ENCODE measurements at regions of chr15 and their contacts with region 1.

Region 1: DNA sequence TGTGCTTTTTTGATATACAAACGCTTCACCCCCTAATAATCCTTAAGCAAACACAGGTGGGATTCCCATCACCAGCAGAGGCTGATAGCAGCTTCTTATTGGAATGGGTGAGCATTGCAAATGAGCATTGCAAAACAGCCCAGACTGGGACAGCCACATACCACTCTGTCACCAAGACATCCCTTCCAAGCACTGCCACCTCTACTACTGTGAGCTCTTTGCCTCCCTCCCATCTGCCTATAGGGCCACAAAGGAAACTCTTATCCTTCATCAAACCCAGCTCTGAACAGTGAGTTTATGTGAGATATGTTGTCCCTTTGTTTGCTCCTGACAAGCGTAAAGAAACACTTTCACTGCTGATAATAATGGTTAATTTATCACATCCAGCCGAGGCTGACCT is 146.6 kb downstream of the ANXA2 start:
- DNase-seq: no peak
- H3K4me3 ChIP-seq: no peak overlapping the region
- H3K27ac ChIP-seq: no peak overlapping the region
- H3K4me1 ChIP-seq: no peaks in the 10 kb centered on the region
- H3K27me3 ChIP-seq: no peaks in the 10 kb centered on the region
- CTCF ChIP-seq: no peak
- EP300 ChIP-seq: no peak
- POLR2A ChIP-seq: no peak

Region 2: GRCh38 chr15:60315878-60316277 is 64.6 kb after region 1 on chr15:
- in situ Hi-C with region 1: no loop called
- intact Hi-C with region 1: no loop called
- DNase-seq: no peak
- H3K4me3 ChIP-seq: no peak overlapping the region
- H3K27ac ChIP-seq: no peak overlapping the region
- H3K4me1 ChIP-seq: peaks cover 0 to 4% (median 0%) of the 10 kb centered on the region in 4 donors
- H3K27me3 ChIP-seq: no peaks in the 10 kb centered on the region
- CTCF ChIP-seq: no peak
- EP300 ChIP-seq: no peak
- POLR2A ChIP-seq: no peak

Region 3: GRCh38 chr15:60751985-60752952 is 501.0 kb after region 1 on chr15:
- in situ Hi-C with region 1: no loop called
- intact Hi-C with region 1: loop called (anchors 5 kb)
- DNase-seq: peak; percentile 29
- H3K4me3 ChIP-seq: no peak overlapping the region
- H3K27ac ChIP-seq: peak overlapping the region; percentile 29 to 63 (median 55)
- H3K4me1 ChIP-seq: peaks cover 0 to 8% (median 0%) of the 10 kb centered on the region in 4 donors
- H3K27me3 ChIP-seq: no peaks in the 10 kb centered on the region
- CTCF ChIP-seq: no peak
- EP300 ChIP-seq: no peak
- POLR2A ChIP-seq: no peak

Measured in transverse colon (tissue), 4 donors.